ENCODE measurements at regions of chr6 and their contacts with region 1.

Region 1: DNA sequence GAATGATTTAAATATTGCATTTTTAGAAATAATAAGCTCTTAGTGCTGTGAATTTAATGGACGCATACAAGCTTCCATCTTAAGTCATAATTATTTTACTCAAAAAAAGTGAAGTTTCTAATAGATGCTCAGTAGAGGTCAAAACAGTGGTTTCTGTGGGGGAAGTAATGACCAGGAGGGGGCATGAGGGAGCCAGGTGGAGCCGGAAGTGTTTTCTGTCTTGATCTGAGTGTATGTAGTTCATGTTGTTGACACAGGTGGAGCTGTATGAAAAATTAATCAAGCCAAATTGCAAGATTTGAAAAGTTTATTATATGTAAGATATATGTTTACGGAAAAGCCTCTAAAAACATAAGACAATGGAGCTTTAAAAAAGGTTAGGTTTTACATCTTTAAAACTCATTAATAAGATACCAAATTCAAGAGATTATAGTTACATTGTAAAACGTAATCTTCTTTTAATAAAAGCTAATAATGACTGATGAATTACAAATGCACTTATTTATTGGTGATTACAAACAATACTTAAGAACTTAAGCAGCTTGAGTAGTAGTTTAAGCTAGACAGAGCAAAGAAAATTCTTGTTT is 68.0 kb downstream of the PLAGL1 start:
- DNase-seq: peak; percentile 61
- H3K4me3 Mint-ChIP-seq: no peak overlapping the region
- H3K27ac Mint-ChIP-seq: no peak overlapping the region
- H3K4me1 Mint-ChIP-seq: peaks cover 5% of the 10 kb centered on the region
- H3K27me3 Mint-ChIP-seq: no peaks in the 10 kb centered on the region

Region 2: DNA sequence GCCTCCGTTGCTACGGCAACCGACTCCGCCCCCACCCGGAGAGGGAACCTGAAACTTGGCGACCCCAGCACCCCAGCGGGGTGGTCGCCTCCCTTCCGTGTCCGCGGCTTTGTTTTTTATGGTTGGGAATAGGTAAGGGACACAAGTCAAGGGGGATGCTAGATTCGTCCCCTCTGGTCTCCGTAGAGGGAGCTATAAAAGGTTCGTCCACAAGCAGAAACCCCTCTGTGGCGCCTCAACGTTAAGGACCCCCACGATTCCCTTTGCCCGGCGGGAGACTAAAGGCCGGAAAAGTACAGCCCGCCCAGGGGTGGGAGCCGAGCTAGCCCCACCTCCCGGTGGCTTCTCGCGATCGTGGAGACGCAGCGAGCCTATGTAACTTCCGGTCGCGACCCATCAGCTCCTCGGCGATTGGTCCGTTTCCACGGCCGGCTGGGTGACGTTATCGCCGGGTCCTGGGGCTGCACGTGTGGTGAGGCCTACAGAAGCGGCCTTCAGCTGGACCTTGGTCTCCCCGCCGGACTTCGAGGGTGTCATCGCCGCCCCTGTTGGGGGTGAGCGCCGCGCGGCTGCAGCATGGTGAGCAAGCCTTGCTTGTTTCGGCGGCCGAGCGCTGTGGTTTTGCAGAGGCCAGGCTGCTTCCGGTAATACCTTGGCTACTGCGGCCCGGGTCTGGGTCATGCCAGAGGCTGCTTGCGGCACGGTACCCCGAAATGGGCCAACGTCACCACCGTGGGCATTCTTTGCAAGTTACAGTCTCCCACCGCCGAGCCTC is 97.0 kb before region 1 on chr6 and contains the start of gene LTV1:
- CTCF ChIA-PET with region 1: interaction called, 11 read pairs
- POLR2A ChIA-PET with region 1: no interaction called
- DNase-seq: peak; percentile 94
- H3K4me3 Mint-ChIP-seq: peak within 1 kb of the TSS; percentile 90
- H3K27ac Mint-ChIP-seq: peak within 1 kb of the TSS; percentile 91
- H3K4me1 Mint-ChIP-seq: peaks cover 20% of the 10 kb centered on the region
- H3K27me3 Mint-ChIP-seq: no peaks in the 10 kb centered on the region
- total RNA-seq, gene LTV1: 18.3 to 18.8 TPM

Region 3: DNA sequence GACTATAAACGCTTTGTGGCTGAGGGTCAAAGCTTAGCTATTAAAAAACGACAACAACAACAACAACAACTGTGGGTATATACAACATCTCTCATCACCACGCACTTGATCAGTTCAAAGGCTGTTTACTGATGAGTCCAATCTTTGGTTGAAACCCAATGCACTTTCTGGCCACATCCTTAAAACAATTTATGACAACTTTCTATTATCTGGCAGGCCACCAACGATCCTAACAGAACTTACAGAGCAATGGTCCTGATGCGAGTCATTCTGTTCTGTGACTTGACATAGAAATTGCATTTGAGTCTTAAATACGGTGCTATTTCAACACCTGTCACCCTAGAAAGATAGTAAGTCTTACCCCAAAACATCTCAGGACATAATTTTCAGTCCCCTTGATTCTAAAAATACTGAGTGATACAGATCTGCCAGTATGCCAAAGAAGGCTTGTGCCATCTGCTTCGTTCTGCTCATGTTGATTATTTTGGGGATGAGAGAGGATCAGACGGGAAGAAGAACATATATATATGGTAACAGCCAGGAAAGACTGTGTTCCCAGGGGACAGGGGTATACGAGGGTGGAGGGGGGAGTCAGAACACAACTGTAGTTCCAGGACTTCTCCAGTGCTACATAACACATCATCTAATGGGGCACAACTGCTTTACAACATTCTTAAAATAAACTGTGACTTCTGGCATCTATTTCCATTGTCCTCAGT is 12.1 kb after region 1 on chr6:
- CTCF ChIA-PET with region 1: interaction called, 13 read pairs
- POLR2A ChIA-PET with region 1: interaction called, 4 read pairs
- DNase-seq: no peak
- H3K4me3 Mint-ChIP-seq: no peak overlapping the region
- H3K27ac Mint-ChIP-seq: no peak overlapping the region
- H3K4me1 Mint-ChIP-seq: no peaks in the 10 kb centered on the region
- H3K27me3 Mint-ChIP-seq: no peaks in the 10 kb centered on the region

Region 4: GRCh38 chr6:143964674-143965081 is 24.6 kb after region 1 on chr6:
- CTCF ChIA-PET with region 1: interaction called, 12 read pairs
- POLR2A ChIA-PET with region 1: no interaction called
- DNase-seq: no peak
- H3K4me3 Mint-ChIP-seq: no peak overlapping the region
- H3K27ac Mint-ChIP-seq: no peak overlapping the region
- H3K4me1 Mint-ChIP-seq: no peaks in the 10 kb centered on the region
- H3K27me3 Mint-ChIP-seq: no peaks in the 10 kb centered on the region

Region 5: DNA sequence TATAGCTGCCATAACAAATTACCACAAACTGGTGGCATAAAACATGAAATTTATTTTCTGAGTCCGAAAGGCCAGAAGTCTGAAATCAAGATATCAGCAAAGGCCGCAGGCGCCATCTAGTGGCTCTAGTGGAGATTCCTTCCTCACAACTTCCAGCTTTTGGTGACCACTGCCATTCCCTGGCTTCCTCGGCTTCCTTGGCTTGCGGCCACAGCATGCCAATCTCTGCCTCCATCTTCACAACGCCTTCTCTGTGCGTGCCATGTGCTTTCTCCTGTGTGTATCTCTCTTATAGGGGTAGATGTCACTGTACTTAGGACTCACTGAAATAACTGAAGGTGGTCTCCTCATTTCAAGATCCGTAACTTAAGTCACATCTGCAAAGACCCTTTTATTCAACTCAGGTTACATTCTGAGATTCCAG is 73.4 kb after region 1 on chr6:
- CTCF ChIA-PET with region 1: interaction called, 46 read pairs
- POLR2A ChIA-PET with region 1: interaction called, 4 read pairs
- DNase-seq: peak; percentile 66
- H3K4me3 Mint-ChIP-seq: no peak overlapping the region
- H3K27ac Mint-ChIP-seq: no peak overlapping the region
- H3K4me1 Mint-ChIP-seq: peaks cover 2% of the 10 kb centered on the region
- H3K27me3 Mint-ChIP-seq: peaks cover 24% of the 10 kb centered on the region

Region 6: DNA sequence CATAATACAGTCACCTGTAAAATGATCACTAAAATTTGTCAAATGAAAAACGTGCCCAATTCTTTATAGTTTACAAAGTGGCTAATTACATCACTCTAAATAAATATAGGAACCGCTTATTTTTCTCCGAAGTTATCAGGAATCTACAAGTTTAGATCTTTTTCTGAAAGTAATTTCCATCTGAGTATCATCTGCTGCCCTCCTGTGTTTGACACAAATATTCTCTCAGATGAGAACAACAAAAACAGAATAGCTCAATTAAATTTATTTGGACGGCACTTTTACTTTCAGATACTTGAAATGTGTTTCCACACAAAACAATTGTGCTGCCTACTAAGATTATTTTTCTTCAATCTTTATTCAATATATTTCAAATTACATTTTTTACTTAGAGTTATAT is 150.3 kb after region 1 on chr6:
- CTCF ChIA-PET with region 1: interaction called, 10 read pairs
- POLR2A ChIA-PET with region 1: interaction called, 4 read pairs
- DNase-seq: no peak
- H3K4me3 Mint-ChIP-seq: no peak overlapping the region
- H3K27ac Mint-ChIP-seq: no peak overlapping the region
- H3K4me1 Mint-ChIP-seq: peaks cover 17% of the 10 kb centered on the region
- H3K27me3 Mint-ChIP-seq: no peaks in the 10 kb centered on the region

Measured in activated CD4-positive, alpha-beta memory T cell treated with anti-CD3 and anti-CD28 coated beads, Interleukin-2, amount 10 ng/mL, durations not matched to agents 7 days and 5 days (primary cell).